GM23248 (cell line): ENCODE measurements at regions of chr12 and their contacts with region 1.

Region 1: GRCh38 chr12:28998637-28999120 is 150.4 kb upstream of the FAR2 start:
- DNase-seq: peak; percentile 69
- H3K4me3 ChIP-seq: no peak overlapping the region
- H3K27ac ChIP-seq: peak overlapping the region; percentile 8; the same call in 1 of the 2 replicates
- H3K4me1 ChIP-seq: no peaks in the 10 kb centered on the region
- H3K27me3 ChIP-seq: no peaks in the 10 kb centered on the region

Region 2: DNA sequence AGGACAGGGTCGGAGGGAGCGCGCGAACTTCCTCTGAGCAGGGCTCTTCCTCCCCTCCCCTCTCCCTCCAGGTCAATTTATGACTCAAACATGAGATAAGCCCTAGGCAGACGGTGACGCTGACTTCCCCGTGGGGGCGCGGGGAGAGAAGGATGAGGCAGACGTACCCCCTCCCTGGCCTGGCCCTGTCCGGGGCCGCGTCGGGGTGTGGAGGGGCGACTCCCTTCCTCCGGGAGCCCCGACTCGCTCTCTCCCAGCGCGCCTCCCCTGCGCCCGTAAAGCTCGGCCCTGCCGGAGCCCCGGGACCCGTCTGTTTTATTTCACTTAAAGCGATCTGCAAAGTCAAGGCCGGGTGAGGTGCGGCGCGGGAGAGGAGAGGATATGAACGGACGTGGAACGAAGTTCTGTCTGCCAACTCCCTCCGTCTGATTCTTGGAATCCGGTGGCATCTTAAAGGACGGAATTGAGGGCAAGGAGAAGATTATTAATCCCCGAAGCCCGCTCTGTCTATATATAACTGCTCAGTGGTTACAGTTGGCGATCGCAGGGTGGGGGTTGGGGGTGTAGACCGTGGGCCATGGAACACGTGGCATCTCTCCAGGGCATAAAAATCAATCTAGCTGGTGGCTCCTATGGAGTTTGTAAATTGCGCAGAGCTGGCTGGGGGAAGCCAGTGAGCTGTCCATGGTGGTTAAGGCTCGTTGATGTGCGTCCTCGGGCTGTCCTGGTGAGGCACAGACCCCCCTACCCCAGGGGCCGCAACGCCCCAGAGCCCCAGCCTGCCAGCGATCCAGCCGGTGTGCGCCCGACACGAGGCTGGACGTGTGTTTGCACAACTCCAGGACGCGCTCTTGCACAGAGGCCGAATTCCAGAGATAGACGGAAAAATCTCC is 1023.2 kb before region 1 on chr12:
- in situ Hi-C with region 1: loop called (anchors 25 kb)
- DNase-seq: peak; percentile 77
- H3K4me3 ChIP-seq: peak overlapping the region; percentile 59
- H3K27ac ChIP-seq: no peak overlapping the region
- H3K4me1 ChIP-seq: peaks cover 17% of the 10 kb centered on the region
- H3K27me3 ChIP-seq: no peaks in the 10 kb centered on the region

Region 3: GRCh38 chr12:29207120-29207519 is 208.4 kb after region 1 on chr12:
- in situ Hi-C with region 1: no loop called
- DNase-seq: no peak
- H3K4me3 ChIP-seq: no peak overlapping the region
- H3K27ac ChIP-seq: no peak overlapping the region
- H3K4me1 ChIP-seq: no peaks in the 10 kb centered on the region
- H3K27me3 ChIP-seq: no peaks in the 10 kb centered on the region